Sciatic nerve (tissue), 2 donors: ENCODE measurements at regions of chr6 and their contacts with region 1.

Region 1: GRCh38 chr6:150905769-150906506 is 40.4 kb downstream of the MTHFD1L start:
- DNase-seq: no peak
- ATAC-seq: no peak

Region 2: DNA sequence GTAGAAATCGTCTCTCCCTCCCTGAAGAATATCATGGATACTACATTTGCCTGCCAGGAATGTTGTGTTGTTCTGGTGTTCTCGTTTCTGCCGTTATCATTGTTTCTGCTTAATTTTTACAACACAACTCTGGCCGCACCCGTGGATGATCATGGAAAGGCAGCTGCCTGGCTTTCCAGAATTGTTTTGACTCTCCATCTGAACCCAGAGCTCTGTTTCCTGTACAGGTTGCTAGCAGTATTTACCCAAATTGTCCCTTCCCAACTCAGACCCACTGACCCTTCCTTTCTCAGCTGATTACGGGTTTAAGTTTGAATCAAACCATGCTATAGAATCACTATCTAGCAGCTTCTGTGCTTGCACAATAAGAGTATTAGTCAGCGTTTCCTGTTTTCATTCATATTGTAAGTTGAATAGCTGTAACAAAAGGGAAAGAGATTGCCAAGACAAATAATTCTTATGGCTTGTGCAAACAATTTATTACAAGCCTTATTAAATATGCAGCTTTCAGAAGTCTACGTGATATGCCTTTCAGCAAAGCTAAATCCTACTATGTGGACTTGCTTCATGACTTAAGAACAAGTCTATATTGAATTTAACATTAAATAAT is 98.6 kb after region 1 on chr6:
- intact Hi-C with region 1: loop called (anchors 10 kb)
- DNase-seq: no peak
- ATAC-seq: peak; percentile 58